Heart right ventricle (tissue), 16 donors: ENCODE measurements at regions of chr19 and their contacts with region 1.

Region 1: DNA sequence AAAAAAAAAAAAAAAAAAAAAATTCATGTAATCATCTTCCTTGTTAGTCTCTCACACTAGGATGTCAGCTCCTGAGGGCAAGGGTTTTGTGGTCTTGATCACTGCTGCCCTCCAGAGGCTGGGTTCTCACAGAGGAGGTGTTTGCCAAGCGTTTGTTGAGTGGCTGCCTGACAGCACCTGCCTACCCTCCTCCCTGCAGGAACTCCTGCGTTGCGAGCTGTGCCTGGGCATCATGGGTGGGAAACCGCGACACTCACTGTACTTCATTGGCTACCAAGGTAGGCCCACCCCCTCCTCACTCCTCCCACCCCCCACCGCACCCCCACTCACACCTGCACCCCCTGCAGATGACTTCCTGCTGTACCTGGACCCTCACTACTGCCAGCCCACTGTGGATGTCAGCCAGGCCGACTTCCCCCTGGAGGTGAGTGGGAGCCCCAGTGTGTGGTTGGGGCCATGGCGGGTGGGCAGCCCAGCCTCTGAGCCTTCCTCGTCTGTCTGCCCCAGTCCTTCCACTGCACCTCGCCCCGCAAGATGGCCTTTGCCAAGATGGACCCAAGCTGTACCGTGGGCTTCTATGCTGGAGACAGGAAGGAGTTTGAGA is 8.1 kb downstream of the ATG4D start:
- DNase-seq: no peak
- ATAC-seq: peak in 3 of 8 donors; percentile 3 to 11 (median 6)
- H3K4me3 ChIP-seq: no peak overlapping the region
- H3K27ac ChIP-seq: no peak overlapping the region
- H3K4me1 ChIP-seq: peaks cover 0 to 24% (median 0%) of the 10 kb centered on the region in 9 donors
- H3K27me3 ChIP-seq: no peaks in the 10 kb centered on the region
- CTCF ChIP-seq: peak in 4 of 9 donors; percentile 8 to 25 (median 10)

Region 2: GRCh38 chr19:10525624-10526023 is 26.2 kb before region 1 on chr19:
- intact Hi-C with region 1: loop called in 1 of 10 experiments (anchors 1 kb)
- DNase-seq: no peak
- ATAC-seq: no peak
- H3K4me3 ChIP-seq: no peak overlapping the region
- H3K27ac ChIP-seq: no peak overlapping the region
- H3K4me1 ChIP-seq: no peaks in the 10 kb centered on the region
- H3K27me3 ChIP-seq: peaks cover 0 to 6% (median 0%) of the 10 kb centered on the region in 7 donors
- CTCF ChIP-seq: no peak

Region 3: GRCh38 chr19:10717356-10718204 is 165.8 kb after region 1 on chr19 and contains the start of gene DNM2:
- intact Hi-C with region 1: no loop called
- DNase-seq: peak; percentile 98 to 100
- ATAC-seq: peak; percentile 91 to 95 (median 94)
- H3K4me3 ChIP-seq: peak within 1 kb of the TSS; percentile 61 to 100 (median 94)
- H3K27ac ChIP-seq: peak within 1 kb of the TSS; percentile 93 to 99 (median 98)
- H3K4me1 ChIP-seq: peaks cover 13 to 44% (median 37%) of the 10 kb centered on the region in 9 donors
- H3K27me3 ChIP-seq: no peaks in the 10 kb centered on the region
- CTCF ChIP-seq: peak; percentile 74 to 94 (median 88)
- total RNA-seq, gene DNM2: 118 to 206 (median 135) TPM